ENCODE measurements at regions of chr9 and their contacts with region 1.

Region 1: GRCh38 chr9:2158111-2158610 is 143.0 kb downstream of the SMARCA2 start:
- DNase-seq: peak; percentile 25
- H3K4me3 Mint-ChIP-seq: peak overlapping the region; percentile 94
- H3K27ac Mint-ChIP-seq: peak overlapping the region; percentile 98
- H3K4me1 Mint-ChIP-seq: peaks cover 43% of the 10 kb centered on the region
- H3K27me3 Mint-ChIP-seq: no peaks in the 10 kb centered on the region

Region 2: GRCh38 chr9:2014696-2015580 is 143.2 kb before region 1 on chr9 and contains the start of gene SMARCA2:
- intact Hi-C with region 1: loop called (anchors 5 kb)
- DNase-seq: peak; percentile 97
- H3K4me3 Mint-ChIP-seq: peak within 1 kb of the TSS; percentile 98
- H3K27ac Mint-ChIP-seq: peak within 1 kb of the TSS; percentile 99
- H3K4me1 Mint-ChIP-seq: peaks cover 39% of the 10 kb centered on the region
- H3K27me3 Mint-ChIP-seq: peaks cover 9% of the 10 kb centered on the region
- total RNA-seq, gene SMARCA2: 84.5 and 90.4 TPM in 2 replicates

Region 3: DNA sequence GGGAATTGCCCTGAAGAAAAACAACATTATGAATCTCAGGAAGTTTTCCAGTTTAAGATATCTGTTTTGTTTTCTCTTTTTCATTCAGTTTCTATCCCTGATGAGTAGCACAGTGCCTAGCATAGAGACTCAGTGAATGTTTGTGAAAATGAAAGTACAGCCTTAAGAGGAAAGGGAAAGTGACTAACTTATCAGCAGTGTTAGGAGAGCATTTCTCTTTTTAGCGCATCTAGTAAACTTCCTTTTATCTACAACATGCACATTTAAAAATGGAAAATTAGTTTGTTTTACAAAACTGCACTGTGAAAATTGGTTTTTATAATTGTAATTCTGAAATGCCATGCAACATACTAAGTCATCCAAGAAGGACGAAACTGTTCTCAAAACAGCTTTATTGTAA is 32.3 kb before region 1 on chr9:
- intact Hi-C with region 1: loop called (anchors 2 kb)
- DNase-seq: no peak
- H3K4me3 Mint-ChIP-seq: no peak overlapping the region
- H3K27ac Mint-ChIP-seq: peak overlapping the region; percentile 49
- H3K4me1 Mint-ChIP-seq: peaks cover 19% of the 10 kb centered on the region
- H3K27me3 Mint-ChIP-seq: no peaks in the 10 kb centered on the region

Region 4: DNA sequence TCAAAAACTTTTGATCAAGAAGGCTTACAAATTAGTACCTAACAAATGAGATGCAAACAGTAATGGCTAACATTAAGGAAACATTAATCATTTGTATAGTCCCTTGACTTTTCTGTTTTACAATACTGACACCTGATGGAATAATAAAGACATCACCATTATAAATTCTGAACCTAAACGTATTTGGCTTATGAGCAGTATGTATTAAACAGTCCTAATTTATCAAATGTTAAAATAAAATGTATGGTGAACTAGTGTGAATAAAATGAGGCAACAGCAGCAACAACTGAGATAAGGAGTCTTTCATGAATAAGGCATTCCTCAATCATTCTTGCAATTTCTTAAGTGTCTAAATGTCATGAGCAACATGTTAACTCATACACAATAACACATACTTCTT is 679.8 kb after region 1 on chr9:
- intact Hi-C with region 1: loop called (anchors 5 kb)
- DNase-seq: no peak
- H3K4me3 Mint-ChIP-seq: no peak overlapping the region
- H3K27ac Mint-ChIP-seq: no peak overlapping the region
- H3K4me1 Mint-ChIP-seq: peaks cover 27% of the 10 kb centered on the region
- H3K27me3 Mint-ChIP-seq: no peaks in the 10 kb centered on the region

Measured in activated T-helper 2 cell treated with anti-CD3 and anti-CD28 coated beads, Interferon-gamma antibody, Interleukin-2, Interleukin-4, amounts not matched to agents 10 μg/mL and 5 μg/mL and 100 μg/mL, durations not matched to agents 14 hours and 24 hours and 36 hours (primary cell).